Esophagus squamous epithelium (tissue), 5 donors: ENCODE measurements at regions of chr19 and their contacts with region 1.

Region 1: GRCh38 chr19:45478454-45479238 is 10.8 kb downstream of the FOSB start:
- DNase-seq: peak; percentile 44
- H3K4me3 ChIP-seq: peak overlapping the region; percentile 45 to 71 (median 54)
- H3K27ac ChIP-seq: peak overlapping the region; percentile 92 to 96 (median 94)
- H3K4me1 ChIP-seq: peaks cover 5 to 20% (median 6%) of the 10 kb centered on the region in 3 donors
- H3K27me3 ChIP-seq: no peaks in the 10 kb centered on the region
- CTCF ChIP-seq: peak; percentile 91 to 99 (median 99)
- POLR2A ChIP-seq: peak in 2 of 4 donors; percentile 48 to 61

Region 2: GRCh38 chr19:45439569-45440254 is 38.9 kb before region 1 on chr19:
- intact Hi-C with region 1: loop called (anchors 2 kb)
- DNase-seq: no peak
- H3K4me3 ChIP-seq: peak overlapping the region; percentile 47 to 86 (median 72)
- H3K27ac ChIP-seq: peak overlapping the region; percentile 72 to 97 (median 92)
- H3K4me1 ChIP-seq: peaks cover 14 to 43% (median 17%) of the 10 kb centered on the region in 3 donors
- H3K27me3 ChIP-seq: no peaks in the 10 kb centered on the region
- CTCF ChIP-seq: peak; percentile 98 to 100 (median 100)
- POLR2A ChIP-seq: no peak

Region 3: GRCh38 chr19:45558399-45558878 is 79.8 kb after region 1 on chr19:
- intact Hi-C with region 1: no loop called
- DNase-seq: no peak
- H3K4me3 ChIP-seq: no peak overlapping the region
- H3K27ac ChIP-seq: no peak overlapping the region
- H3K4me1 ChIP-seq: peaks cover 0 to 16% (median 0%) of the 10 kb centered on the region in 3 donors
- H3K27me3 ChIP-seq: no peaks in the 10 kb centered on the region
- CTCF ChIP-seq: peak; percentile 65 to 82 (median 76)
- POLR2A ChIP-seq: no peak